CD4-positive, alpha-beta T cell (primary cell): ENCODE measurements at regions of chr1 and their contacts with region 1.

Region 1: DNA sequence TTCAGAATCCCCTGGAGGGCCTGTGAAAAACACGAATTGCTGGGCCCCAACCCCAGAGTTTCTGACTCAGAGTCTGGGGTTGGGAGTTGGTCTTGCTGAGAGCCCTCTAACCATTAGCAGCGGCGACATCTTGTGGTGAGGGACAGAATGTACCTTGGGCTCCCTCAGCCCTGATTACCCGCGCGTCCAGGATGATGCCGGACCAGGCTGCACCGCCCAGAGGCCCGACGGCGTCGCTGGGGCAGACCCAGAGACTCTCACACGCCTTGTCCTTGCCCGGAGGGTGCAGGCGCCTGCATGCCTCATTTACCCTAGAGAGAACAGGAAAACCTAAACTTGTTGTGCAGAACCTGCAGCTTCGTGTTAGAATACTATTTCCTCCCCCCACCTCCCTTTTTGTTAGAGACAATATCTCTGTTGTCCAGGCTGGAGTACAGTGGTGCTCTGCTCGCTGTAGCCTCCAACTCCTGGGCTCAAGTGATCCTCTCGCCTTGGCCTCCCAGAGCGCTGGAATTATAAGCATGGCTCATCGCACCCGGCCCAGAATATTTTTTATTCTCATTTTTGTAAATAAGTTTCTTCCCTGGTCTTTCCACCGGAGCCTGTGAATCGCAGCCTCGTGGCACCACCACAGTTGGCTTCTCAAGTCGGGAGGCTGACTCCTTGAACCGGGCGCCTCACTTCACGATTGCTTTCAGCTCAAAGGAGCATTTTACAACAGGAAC is 22.2 kb upstream of the RD3 start:
- DNase-seq: peak; percentile 47 to 81 (median 61)
- ATAC-seq: peak; percentile 60
- H3K4me3 ChIP-seq: no peak overlapping the region
- H3K4me3 Mint-ChIP-seq: peak overlapping the region; percentile 82
- H3K27ac ChIP-seq: no peak overlapping the region
- H3K27ac Mint-ChIP-seq: no peak overlapping the region
- H3K4me1 ChIP-seq: peaks cover 20% of the 10 kb centered on the region
- H3K4me1 Mint-ChIP-seq: peaks cover 22% of the 10 kb centered on the region
- H3K27me3 ChIP-seq: no peaks in the 10 kb centered on the region
- H3K27me3 Mint-ChIP-seq: no peaks in the 10 kb centered on the region
- CTCF ChIP-seq: peak; percentile 69

Region 2: GRCh38 chr1:211625040-211625439 is 110.8 kb after region 1 on chr1:
- CTCF ChIA-PET with region 1: no interaction called
- POLR2A ChIA-PET with region 1: no interaction called
- intact Hi-C with region 1: loop called in 1 of 2 experiments (anchors 10 kb)
- DNase-seq: peak in 9 of 14 experiments; percentile 5 to 72 (median 24)
- ATAC-seq: peak; percentile 52
- H3K4me3 ChIP-seq: no peak overlapping the region
- H3K4me3 Mint-ChIP-seq: no peak overlapping the region
- H3K27ac ChIP-seq: no peak overlapping the region
- H3K27ac Mint-ChIP-seq: no peak overlapping the region
- H3K4me1 ChIP-seq: peaks cover 4% of the 10 kb centered on the region
- H3K4me1 Mint-ChIP-seq: peaks cover 6% of the 10 kb centered on the region
- H3K27me3 ChIP-seq: no peaks in the 10 kb centered on the region
- H3K27me3 Mint-ChIP-seq: no peaks in the 10 kb centered on the region
- CTCF ChIP-seq: no peak

Region 3: GRCh38 chr1:211654838-211655787 is 140.9 kb after region 1 on chr1:
- CTCF ChIA-PET with region 1: interaction called, 6 read pairs
- POLR2A ChIA-PET with region 1: no interaction called
- intact Hi-C with region 1: loop called (anchors 1 kb)
- DNase-seq: peak; percentile 68 to 88 (median 78)
- ATAC-seq: peak; percentile 98
- H3K4me3 ChIP-seq: no peak overlapping the region
- H3K4me3 Mint-ChIP-seq: no peak overlapping the region
- H3K27ac ChIP-seq: no peak overlapping the region
- H3K27ac Mint-ChIP-seq: no peak overlapping the region
- H3K4me1 ChIP-seq: peaks cover 5% of the 10 kb centered on the region
- H3K4me1 Mint-ChIP-seq: no peaks in the 10 kb centered on the region
- H3K27me3 ChIP-seq: no peaks in the 10 kb centered on the region
- H3K27me3 Mint-ChIP-seq: no peaks in the 10 kb centered on the region
- CTCF ChIP-seq: peak; percentile 89

Region 4: GRCh38 chr1:212498283-212499040 is 984.3 kb after region 1 on chr1:
- CTCF ChIA-PET with region 1: no interaction called
- POLR2A ChIA-PET with region 1: no interaction called
- intact Hi-C with region 1: no loop called
- DNase-seq: no peak
- ATAC-seq: no peak
- H3K4me3 ChIP-seq: no peak overlapping the region
- H3K4me3 Mint-ChIP-seq: no peak overlapping the region
- H3K27ac ChIP-seq: no peak overlapping the region
- H3K27ac Mint-ChIP-seq: no peak overlapping the region
- H3K4me1 ChIP-seq: no peaks in the 10 kb centered on the region
- H3K4me1 Mint-ChIP-seq: no peaks in the 10 kb centered on the region
- H3K27me3 ChIP-seq: no peaks in the 10 kb centered on the region
- H3K27me3 Mint-ChIP-seq: no peaks in the 10 kb centered on the region
- CTCF ChIP-seq: no peak